ENCODE measurements at regions of chr7 and their contacts with region 1.

Region 1: GRCh38 chr7:151351027-151351426 is 9.4 kb downstream of the NUB1 start:
- DNase-seq: peak; percentile 26
- H3K4me3 ChIP-seq: no peak overlapping the region
- H3K27ac ChIP-seq: no peak overlapping the region
- H3K4me1 ChIP-seq: peaks cover 12 to 42% (median 15%) of the 10 kb centered on the region in 4 donors
- H3K27me3 ChIP-seq: no peaks in the 10 kb centered on the region
- CTCF ChIP-seq: no peak
- EP300 ChIP-seq: no peak
- POLR2A ChIP-seq: no peak

Region 2: DNA sequence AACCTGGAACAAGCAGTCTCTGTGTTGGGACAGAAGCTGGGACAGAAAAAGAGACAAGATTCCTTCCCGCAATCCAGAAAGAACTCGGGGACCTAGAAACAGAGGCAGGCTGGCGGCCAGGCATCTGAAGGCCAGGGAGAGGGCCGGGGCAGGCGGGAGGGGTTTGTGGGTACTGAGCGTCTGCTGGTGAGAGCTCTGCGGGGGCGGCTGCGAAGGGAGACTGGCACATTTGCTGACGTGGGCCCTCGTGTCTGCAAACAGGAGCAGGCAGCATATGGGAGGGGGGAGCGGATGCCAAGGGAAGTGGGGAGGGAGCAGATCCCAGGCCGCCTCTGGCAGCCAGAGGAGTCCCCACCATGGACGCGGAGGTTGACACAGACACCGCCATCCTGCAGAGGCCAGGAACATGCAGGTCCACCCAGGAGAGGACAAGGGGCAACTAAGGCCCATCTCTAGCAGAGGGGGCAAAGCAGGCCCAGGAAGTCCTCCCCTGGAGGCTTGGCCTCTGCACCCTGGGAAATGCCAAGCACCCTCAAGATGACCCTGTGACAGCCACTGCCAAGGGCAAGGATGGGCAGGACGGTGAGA is 405.1 kb before region 1 on chr7:
- in situ Hi-C with region 1: no loop called
- intact Hi-C with region 1: no loop called
- DNase-seq: peak; percentile 51
- H3K4me3 ChIP-seq: no peak overlapping the region
- H3K27ac ChIP-seq: peak overlapping the region; percentile 56 to 86 (median 68)
- H3K4me1 ChIP-seq: peaks cover 0 to 24% (median 12%) of the 10 kb centered on the region in 4 donors
- H3K27me3 ChIP-seq: peaks cover 15% of the 10 kb centered on the region
- CTCF ChIP-seq: no peak
- EP300 ChIP-seq: no peak
- POLR2A ChIP-seq: no peak

Region 3: GRCh38 chr7:151315038-151315655 is 35.9 kb before region 1 on chr7:
- in situ Hi-C with region 1: loop called in 2 of 4 experiments (anchors 5 kb)
- intact Hi-C with region 1: loop called (anchors 2 kb)
- DNase-seq: peak; percentile 72
- H3K4me3 ChIP-seq: no peak overlapping the region
- H3K27ac ChIP-seq: no peak overlapping the region
- H3K4me1 ChIP-seq: peaks cover 0 to 6% (median 0%) of the 10 kb centered on the region in 4 donors
- H3K27me3 ChIP-seq: no peaks in the 10 kb centered on the region
- CTCF ChIP-seq: peak; percentile 81 to 92 (median 84)
- EP300 ChIP-seq: no peak
- POLR2A ChIP-seq: no peak

Region 4: DNA sequence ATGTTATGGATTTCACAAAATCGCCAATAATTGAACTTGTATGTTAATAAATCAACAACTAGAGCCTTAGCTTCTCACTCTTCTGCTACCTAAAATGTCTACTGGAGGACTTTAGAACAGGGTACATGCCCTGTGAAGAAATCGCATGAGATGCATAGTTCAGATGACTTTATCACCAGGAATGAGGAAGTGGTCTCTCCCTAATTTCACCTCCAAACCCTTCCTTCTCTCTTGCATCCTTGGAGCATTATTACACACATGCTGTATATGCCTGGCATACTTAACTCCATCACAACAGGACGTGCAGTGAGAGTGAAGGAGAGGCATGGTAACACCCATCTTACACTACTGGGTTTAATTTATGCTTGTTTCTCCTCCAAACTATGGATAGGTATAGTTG is 140.8 kb after region 1 on chr7:
- in situ Hi-C with region 1: no loop called
- intact Hi-C with region 1: no loop called
- DNase-seq: no peak
- H3K4me3 ChIP-seq: no peak overlapping the region
- H3K27ac ChIP-seq: no peak overlapping the region
- H3K4me1 ChIP-seq: peaks cover 16 to 50% (median 36%) of the 10 kb centered on the region in 4 donors
- H3K27me3 ChIP-seq: no peaks in the 10 kb centered on the region
- CTCF ChIP-seq: no peak
- EP300 ChIP-seq: no peak
- POLR2A ChIP-seq: no peak

Measured in transverse colon (tissue), 4 donors.